ENCODE measurements at regions of chr2 and their contacts with region 1.

Region 1: GRCh38 chr2:219160186-219161017 is at the start of gene NHEJ1:
- DNase-seq: peak in 1 of 2 experiments; percentile 100
- H3K4me3 ChIP-seq: peak within 1 kb of the TSS; percentile 78 to 83 (median 81)
- H3K27ac ChIP-seq: 0 out of 2 replicates have a peak within 1 kb of the TSS, but pooled peaks have one; percentile 69
- H3K4me1 ChIP-seq: peaks cover 0 to 5% (median 2%) of the 10 kb centered on the region in 4 experiments; a peak in 3 of 7 replicates
- H3K27me3 ChIP-seq: no peaks in the 10 kb centered on the region; a peak in 2 of 7 replicates
- CTCF ChIP-seq: peak; percentile 86 to 90 (median 89)
- EP300 ChIP-seq: no peak
- POLR2A ChIP-seq: peak in 1 of 2 experiments; percentile 75; a peak in 2 of 3 replicates
- RAD21 ChIP-seq: peak; percentile 78 to 82
- total RNA-seq, gene NHEJ1: 22.7 and 25.7 TPM in 2 replicates

Region 2: GRCh38 chr2:219073413-219074129 is 86.8 kb before region 1 on chr2:
- CTCF ChIA-PET with region 1: interaction called, 99 read pairs
- POLR2A ChIA-PET with region 1: interaction called, 3 read pairs
- DNase-seq: peak in 1 of 2 experiments; percentile 63
- H3K4me3 ChIP-seq: peak overlapping the region in 1 of 4 experiments; percentile 41; a peak in 2 of 8 replicates
- H3K27ac ChIP-seq: no peak overlapping the region
- H3K4me1 ChIP-seq: 0 out of 7 replicates have a peak, but pooled peaks cover 0 to 3% (median under 1%) of the 10 kb centered on the region in 4 experiments
- H3K27me3 ChIP-seq: no peaks in the 10 kb centered on the region
- CTCF ChIP-seq: peak; percentile 70 to 87 (median 85)
- EP300 ChIP-seq: no peak
- POLR2A ChIP-seq: no peak
- RAD21 ChIP-seq: peak; percentile 77 to 84

Region 3: DNA sequence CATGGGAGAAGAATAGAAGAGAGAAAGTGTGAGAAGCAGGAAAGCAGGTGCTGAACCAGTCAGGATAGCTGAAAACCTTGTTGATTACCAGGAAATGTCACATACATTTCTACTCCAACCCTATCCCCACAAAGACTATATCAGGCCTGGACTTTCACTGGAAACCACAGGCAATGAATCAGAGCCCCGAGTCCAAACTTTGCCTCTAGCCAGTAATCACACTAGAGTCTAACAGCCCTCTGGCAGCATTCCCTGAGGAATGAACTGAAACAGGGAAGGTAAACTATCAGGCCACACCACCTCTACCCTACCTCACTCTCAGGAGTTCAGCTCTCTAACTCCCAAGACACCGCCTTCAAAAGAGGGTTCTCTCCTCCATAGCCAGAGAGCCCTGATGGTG is 81.0 kb before region 1 on chr2:
- CTCF ChIA-PET with region 1: interaction called, 99 read pairs
- POLR2A ChIA-PET with region 1: no interaction called
- DNase-seq: no peak
- H3K4me3 ChIP-seq: no peak overlapping the region
- H3K27ac ChIP-seq: no peak overlapping the region
- H3K4me1 ChIP-seq: no peaks in the 10 kb centered on the region
- H3K27me3 ChIP-seq: no peaks in the 10 kb centered on the region
- CTCF ChIP-seq: no peak
- EP300 ChIP-seq: no peak
- POLR2A ChIP-seq: no peak
- RAD21 ChIP-seq: no peak

Region 4: DNA sequence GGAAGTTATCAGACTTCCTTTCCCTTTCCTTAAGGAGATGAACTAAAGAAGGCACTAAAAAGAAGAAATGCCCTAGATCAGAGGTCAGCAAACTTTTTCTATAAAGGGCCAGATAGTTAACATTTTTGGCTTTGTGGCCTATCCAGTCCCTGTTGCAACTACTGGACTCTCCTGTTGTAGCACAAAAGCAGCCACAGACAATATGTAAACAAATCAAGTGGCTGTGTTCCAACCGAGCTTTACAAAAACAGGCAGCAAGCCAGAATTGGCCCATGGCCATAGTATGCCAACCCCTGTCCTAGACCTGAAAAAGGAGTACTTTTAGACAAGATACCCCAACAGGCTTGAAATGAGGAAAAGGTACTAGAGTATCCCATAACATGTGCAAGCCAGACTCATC is 10.7 kb before region 1 on chr2:
- CTCF ChIA-PET with region 1: interaction called, 10 read pairs
- POLR2A ChIA-PET with region 1: no interaction called
- DNase-seq: no peak
- H3K4me3 ChIP-seq: no peak overlapping the region
- H3K27ac ChIP-seq: no peak overlapping the region
- H3K4me1 ChIP-seq: no peaks in the 10 kb centered on the region
- H3K27me3 ChIP-seq: no peaks in the 10 kb centered on the region
- CTCF ChIP-seq: no peak
- EP300 ChIP-seq: no peak
- POLR2A ChIP-seq: no peak
- RAD21 ChIP-seq: no peak

Region 5: GRCh38 chr2:219177552-219178376 is 17.4 kb after region 1 on chr2 and contains the start of gene RETREG2:
- CTCF ChIA-PET with region 1: interaction called, 71 read pairs
- POLR2A ChIA-PET with region 1: interaction called, 9 read pairs
- DNase-seq: peak; percentile 61 to 88
- H3K4me3 ChIP-seq: peak within 1 kb of the TSS; percentile 78 to 96 (median 92)
- H3K27ac ChIP-seq: peak within 1 kb of the TSS; percentile 78
- H3K4me1 ChIP-seq: peaks cover 0 to 13% (median 6%) of the 10 kb centered on the region in 4 experiments; a peak in 6 of 7 replicates
- H3K27me3 ChIP-seq: no peaks in the 10 kb centered on the region
- CTCF ChIP-seq: peak; percentile 44 to 61 (median 53)
- EP300 ChIP-seq: peak in 1 of 2 experiments; percentile 81; a peak in 1 of 3 replicates
- POLR2A ChIP-seq: peak in 1 of 2 experiments; percentile 31; a peak in 1 of 3 replicates
- RAD21 ChIP-seq: peak in 1 of 2 experiments; percentile 36; a peak in 1 of 4 replicates
- total RNA-seq, gene RETREG2: 50.2 and 51.3 TPM in 2 replicates